ENCODE measurements at regions of chr6 and their contacts with region 1.

Region 1: GRCh38 chr6:166775180-166776081 is 148.4 kb upstream of the RPS6KA2 start:
- DNase-seq: peak; percentile 35
- H3K4me3 Mint-ChIP-seq: no peak overlapping the region
- H3K27ac Mint-ChIP-seq: no peak overlapping the region
- H3K4me1 Mint-ChIP-seq: peaks cover 3% of the 10 kb centered on the region
- H3K27me3 Mint-ChIP-seq: peaks cover 18% of the 10 kb centered on the region

Region 2: DNA sequence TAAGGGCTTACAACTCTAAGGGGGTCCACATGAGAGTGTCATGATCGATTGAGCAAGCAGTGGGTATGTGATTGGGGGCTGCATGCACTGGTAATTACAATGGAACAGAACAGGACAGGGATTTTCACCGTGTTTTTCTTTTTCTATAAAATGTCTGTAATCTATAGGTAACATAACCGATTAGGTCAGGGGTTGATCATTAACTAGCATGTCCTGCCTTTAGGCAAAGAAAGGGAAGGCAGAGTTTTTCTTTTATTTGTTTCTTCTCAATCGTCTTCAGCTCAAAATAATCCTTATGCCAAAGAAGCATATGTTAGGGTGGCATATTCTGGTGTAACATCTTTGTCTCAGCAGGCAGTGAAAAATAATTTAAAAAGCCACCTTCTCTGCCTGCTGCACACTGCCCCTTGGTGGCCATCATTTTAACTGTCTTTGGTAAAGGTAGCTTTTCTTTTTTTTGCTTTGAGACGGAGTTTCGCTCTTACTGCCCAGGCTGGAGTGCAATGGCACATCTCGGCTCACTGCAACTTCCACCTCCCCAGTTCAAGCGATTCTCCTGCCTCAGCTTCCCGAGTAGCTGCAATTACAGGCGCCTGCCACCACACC is 214.1 kb after region 1 on chr6:
- intact Hi-C with region 1: loop called (anchors 1 kb)
- DNase-seq: peak; percentile 36
- H3K4me3 Mint-ChIP-seq: no peak overlapping the region
- H3K27ac Mint-ChIP-seq: no peak overlapping the region
- H3K4me1 Mint-ChIP-seq: peaks cover 26% of the 10 kb centered on the region
- H3K27me3 Mint-ChIP-seq: no peaks in the 10 kb centered on the region

Region 3: GRCh38 chr6:167141667-167142432 is 366.4 kb after region 1 on chr6:
- intact Hi-C with region 1: loop called (anchors 1 kb)
- DNase-seq: peak; percentile 12
- H3K4me3 Mint-ChIP-seq: no peak overlapping the region
- H3K27ac Mint-ChIP-seq: no peak overlapping the region
- H3K4me1 Mint-ChIP-seq: no peaks in the 10 kb centered on the region
- H3K27me3 Mint-ChIP-seq: peaks cover 28% of the 10 kb centered on the region

Region 4: GRCh38 chr6:167285077-167285770 is 509.8 kb after region 1 on chr6:
- intact Hi-C with region 1: loop called (anchors 5 kb)
- DNase-seq: no peak
- H3K4me3 Mint-ChIP-seq: no peak overlapping the region
- H3K27ac Mint-ChIP-seq: no peak overlapping the region
- H3K4me1 Mint-ChIP-seq: no peaks in the 10 kb centered on the region
- H3K27me3 Mint-ChIP-seq: peaks cover 2% of the 10 kb centered on the region